Activated CD4-positive, alpha-beta memory T cell treated with anti-CD3 and anti-CD28 coated beads for 36 hours (primary cell): ENCODE measurements at regions of chr12 and their contacts with region 1.

Region 1: GRCh38 chr12:89162704-89163261 is 189.5 kb downstream of the DUSP6 start:
- DNase-seq: peak; percentile 90
- H3K4me3 Mint-ChIP-seq: no peak overlapping the region
- H3K27ac Mint-ChIP-seq: no peak overlapping the region
- H3K4me1 Mint-ChIP-seq: peaks cover 13% of the 10 kb centered on the region
- H3K27me3 Mint-ChIP-seq: no peaks in the 10 kb centered on the region

Region 2: GRCh38 chr12:88141770-88142609 is 1020.8 kb before region 1 on chr12 and contains the starts of genes CEP290 and TMTC3:
- CTCF ChIA-PET with region 1: no interaction called
- POLR2A ChIA-PET with region 1: no interaction called
- intact Hi-C with region 1: loop called (anchors 5 kb)
- DNase-seq: peak; percentile 95
- H3K4me3 Mint-ChIP-seq: peak within 1 kb of the TSS; percentile 96
- H3K27ac Mint-ChIP-seq: peak within 1 kb of the TSS; percentile 86
- H3K4me1 Mint-ChIP-seq: peaks cover 37% of the 10 kb centered on the region
- H3K27me3 Mint-ChIP-seq: no peaks in the 10 kb centered on the region
- total RNA-seq, gene CEP290: 12.8 to 13.7 TPM
- total RNA-seq, gene TMTC3: 5.3 to 6.8 TPM

Region 3: GRCh38 chr12:89073027-89073398 is 89.8 kb before region 1 on chr12:
- CTCF ChIA-PET with region 1: interaction called, 3 read pairs
- POLR2A ChIA-PET with region 1: no interaction called
- intact Hi-C with region 1: loop called (anchors 1 kb)
- DNase-seq: peak; percentile 48
- H3K4me3 Mint-ChIP-seq: no peak overlapping the region
- H3K27ac Mint-ChIP-seq: peak overlapping the region; percentile 86
- H3K4me1 Mint-ChIP-seq: peaks cover 41% of the 10 kb centered on the region
- H3K27me3 Mint-ChIP-seq: no peaks in the 10 kb centered on the region

Region 4: GRCh38 chr12:89135976-89136634 is 26.7 kb before region 1 on chr12:
- CTCF ChIA-PET with region 1: interaction called, 4 read pairs
- POLR2A ChIA-PET with region 1: interaction called, 3 read pairs
- intact Hi-C with region 1: loop called (anchors 1 kb)
- DNase-seq: no peak
- H3K4me3 Mint-ChIP-seq: no peak overlapping the region
- H3K27ac Mint-ChIP-seq: no peak overlapping the region
- H3K4me1 Mint-ChIP-seq: peaks cover 31% of the 10 kb centered on the region
- H3K27me3 Mint-ChIP-seq: no peaks in the 10 kb centered on the region

Region 5: GRCh38 chr12:89345830-89346740 is 183.3 kb after region 1 on chr12:
- CTCF ChIA-PET with region 1: interaction called, 3 read pairs
- POLR2A ChIA-PET with region 1: interaction called, 13 read pairs
- intact Hi-C with region 1: loop called (anchors 1 kb)
- DNase-seq: peak; percentile 65
- H3K4me3 Mint-ChIP-seq: peak overlapping the region; percentile 57
- H3K27ac Mint-ChIP-seq: peak overlapping the region; percentile 76
- H3K4me1 Mint-ChIP-seq: peaks cover 56% of the 10 kb centered on the region
- H3K27me3 Mint-ChIP-seq: peaks cover 2% of the 10 kb centered on the region

Region 6: GRCh38 chr12:89494411-89495231 is 331.8 kb after region 1 on chr12:
- CTCF ChIA-PET with region 1: no interaction called
- POLR2A ChIA-PET with region 1: no interaction called
- intact Hi-C with region 1: loop called (anchors 1 kb)
- DNase-seq: peak; percentile 71
- H3K4me3 Mint-ChIP-seq: peak overlapping the region; percentile 36
- H3K27ac Mint-ChIP-seq: peak overlapping the region; percentile 99
- H3K4me1 Mint-ChIP-seq: peaks cover 30% of the 10 kb centered on the region
- H3K27me3 Mint-ChIP-seq: no peaks in the 10 kb centered on the region

Region 7: DNA sequence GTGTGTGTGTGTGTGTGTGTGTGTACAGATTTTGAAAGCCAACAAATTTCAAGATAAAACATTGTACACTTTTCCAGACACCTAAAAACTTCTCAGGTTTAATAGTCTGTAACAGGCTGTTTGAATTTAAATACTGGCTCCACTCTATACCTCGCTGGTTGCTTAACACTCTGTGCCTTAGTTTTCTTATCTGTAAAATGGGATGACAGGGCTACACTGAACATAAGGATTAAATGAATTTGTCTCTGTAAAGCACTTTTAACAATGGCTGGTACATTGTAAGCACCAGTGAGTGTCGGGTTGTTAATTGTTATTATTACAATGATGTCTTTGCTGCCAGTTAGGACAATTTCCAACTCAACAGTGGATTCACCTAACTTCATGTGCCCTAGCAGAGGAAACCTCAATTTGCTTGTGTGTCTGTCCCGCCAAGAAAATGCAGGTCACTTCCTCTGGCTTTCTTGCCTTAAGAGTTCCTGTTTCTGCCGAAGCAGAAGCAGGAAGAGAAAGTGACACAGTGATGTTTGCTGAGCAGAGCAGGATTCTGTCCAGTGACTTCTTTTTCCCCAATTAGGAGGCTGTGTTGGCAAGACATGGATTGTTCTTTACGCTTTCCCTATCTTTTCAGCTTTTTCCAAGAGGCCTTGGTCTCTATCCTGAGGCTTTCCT is 699.9 kb after region 1 on chr12:
- CTCF ChIA-PET with region 1: no interaction called
- POLR2A ChIA-PET with region 1: no interaction called
- intact Hi-C with region 1: loop called (anchors 5 kb)
- DNase-seq: peak; percentile 57
- H3K4me3 Mint-ChIP-seq: peak overlapping the region; percentile 66
- H3K27ac Mint-ChIP-seq: peak overlapping the region; percentile 95
- H3K4me1 Mint-ChIP-seq: peaks cover 67% of the 10 kb centered on the region
- H3K27me3 Mint-ChIP-seq: no peaks in the 10 kb centered on the region